GM10248 (cell line): ENCODE measurements at regions of chr2 and their contacts with region 1.

Region 1: DNA sequence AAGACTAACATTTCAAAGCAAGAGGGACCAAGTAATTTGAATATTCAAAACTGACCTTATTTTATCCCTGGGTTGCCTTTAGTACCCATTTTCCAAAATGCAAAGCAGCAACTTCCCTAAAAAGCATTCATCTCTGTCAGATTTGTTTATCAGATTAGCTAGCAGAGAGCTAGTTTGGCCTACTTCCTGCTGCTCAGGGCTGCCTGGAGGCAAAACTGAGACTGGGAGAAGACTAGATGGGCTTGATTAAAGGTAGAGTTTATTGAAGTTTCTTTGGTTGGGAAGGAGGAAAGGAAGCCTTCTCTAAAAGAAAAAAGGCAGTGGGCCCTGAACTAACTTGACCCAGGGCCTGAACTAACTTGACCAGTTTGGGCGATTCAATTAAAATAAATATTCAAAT is 426.1 kb upstream of the FAM98A start:
- DNase-seq: no peak
- CTCF ChIP-seq: no peak

Region 2: DNA sequence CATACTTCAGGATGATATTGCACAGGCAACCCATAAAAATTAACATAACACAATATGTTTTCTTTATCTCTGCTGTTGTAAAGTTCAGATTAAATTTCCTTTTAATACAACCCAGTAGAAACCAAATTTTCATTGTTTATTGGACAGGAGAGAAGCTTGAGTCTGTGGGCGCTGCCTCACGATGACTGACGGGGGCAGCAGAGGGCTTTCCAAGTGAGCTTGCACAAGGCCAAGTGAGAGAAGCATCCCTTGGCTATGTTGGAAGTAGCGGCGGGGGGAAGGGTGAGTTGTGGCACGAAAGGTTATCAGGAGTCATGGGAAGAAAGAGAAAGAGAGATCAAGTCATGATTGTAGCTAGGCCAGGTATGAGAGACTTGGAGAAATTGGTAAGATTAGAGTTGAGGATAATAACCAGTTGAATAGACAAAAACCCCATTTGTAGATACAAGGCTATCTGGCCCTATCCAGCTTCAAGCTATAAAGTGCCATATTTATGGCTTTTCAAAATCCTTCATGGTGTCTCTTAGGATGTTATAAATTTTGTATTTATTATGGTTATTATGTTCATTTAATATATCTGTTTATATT is 12.4 kb before region 1 on chr2:
- CTCF ChIA-PET with region 1: interaction called, 17 read pairs
- POLR2A ChIA-PET with region 1: no interaction called
- DNase-seq: no peak
- CTCF ChIP-seq: peak; percentile 76

Region 3: GRCh38 chr2:34229998-34230397 is 204.8 kb after region 1 on chr2:
- CTCF ChIA-PET with region 1: no interaction called
- POLR2A ChIA-PET with region 1: no interaction called
- DNase-seq: no peak
- CTCF ChIP-seq: no peak

Region 4: DNA sequence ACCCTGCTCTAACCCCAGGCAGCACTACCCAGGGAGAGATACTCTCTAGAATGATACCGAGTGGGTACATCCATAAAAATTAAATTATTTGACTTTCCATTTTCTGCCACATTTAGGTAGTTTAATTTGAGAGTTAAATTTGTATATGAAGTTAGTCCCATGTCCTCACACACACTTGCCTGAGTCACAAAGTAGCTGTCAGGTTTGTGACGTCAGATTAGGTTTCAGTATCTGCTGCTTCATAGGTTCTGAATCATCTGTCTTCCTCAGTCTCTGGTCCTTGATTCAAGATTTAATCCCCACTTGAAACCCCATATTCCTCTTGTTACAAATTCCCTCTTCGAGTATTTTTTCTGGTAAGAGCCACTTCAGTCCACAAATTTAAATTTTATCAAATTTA is 312.5 kb after region 1 on chr2:
- CTCF ChIA-PET with region 1: no interaction called
- POLR2A ChIA-PET with region 1: no interaction called
- DNase-seq: no peak
- CTCF ChIP-seq: no peak